BJ (cell line): ENCODE measurements at regions of chr2 and their contacts with region 1.

Region 1: GRCh38 chr2:74740389-74741075 is 86.5 kb downstream of the SEMA4F start:
- DNase-seq: peak; percentile 95
- H3K4me3 ChIP-seq: no peak overlapping the region
- H3K27me3 ChIP-seq: no peaks in the 10 kb centered on the region
- CTCF ChIP-seq: 0 out of 2 replicates have a peak, but pooled peaks have one; percentile 3

Region 2: DNA sequence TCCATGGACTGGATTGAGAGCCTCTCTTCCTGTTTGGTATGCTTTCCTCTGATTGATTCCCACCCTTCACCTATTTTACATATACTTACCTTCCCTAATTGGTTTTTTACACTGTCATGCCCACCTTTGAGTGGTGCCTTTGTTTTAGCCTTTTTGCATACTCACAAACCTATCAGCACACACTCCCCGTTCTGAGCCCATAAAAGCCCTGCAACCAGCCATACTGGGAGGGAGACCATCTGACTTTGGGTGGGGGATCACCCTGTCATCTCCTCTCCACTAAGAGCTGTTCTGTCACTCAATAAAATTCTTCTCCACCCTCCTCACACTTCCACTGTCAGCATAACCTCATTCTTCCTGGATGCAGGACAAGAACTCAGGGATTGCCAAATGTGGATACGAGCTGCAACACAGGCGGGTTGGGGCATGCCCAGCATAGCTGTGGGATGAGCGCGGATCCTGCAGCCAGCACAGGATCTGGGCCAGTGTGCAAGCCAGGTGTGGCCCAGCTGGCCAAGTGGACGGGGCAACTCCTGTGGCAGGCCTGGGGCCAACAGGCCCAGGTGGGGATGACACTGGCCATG is 552.4 kb before region 1 on chr2:
- CTCF ChIA-PET with region 1: no interaction called
- POLR2A ChIA-PET with region 1: interaction called, 14 read pairs
- DNase-seq: peak; percentile 51
- H3K4me3 ChIP-seq: no peak overlapping the region
- H3K27me3 ChIP-seq: peaks cover 2% of the 10 kb centered on the region; the same call in 1 of the 2 replicates
- CTCF ChIP-seq: no peak

Region 3: GRCh38 chr2:74482801-74483674 is 257.5 kb before region 1 on chr2 and contains the starts of genes CCDC142 and TTC31:
- CTCF ChIA-PET with region 1: no interaction called
- POLR2A ChIA-PET with region 1: no interaction called
- DNase-seq: peak; percentile 74
- H3K4me3 ChIP-seq: peak within 1 kb of the TSS; percentile 91
- H3K27me3 ChIP-seq: no peaks in the 10 kb centered on the region
- CTCF ChIP-seq: peak; percentile 92
- polyA plus RNA-seq, gene CCDC142: 4.5 and 6.2 TPM in 2 replicates
- polyA plus RNA-seq, gene TTC31: 19.4 and 26.0 TPM in 2 replicates